GM13976 (cell line): ENCODE measurements at regions of chr6 and their contacts with region 1.

Region 1: DNA sequence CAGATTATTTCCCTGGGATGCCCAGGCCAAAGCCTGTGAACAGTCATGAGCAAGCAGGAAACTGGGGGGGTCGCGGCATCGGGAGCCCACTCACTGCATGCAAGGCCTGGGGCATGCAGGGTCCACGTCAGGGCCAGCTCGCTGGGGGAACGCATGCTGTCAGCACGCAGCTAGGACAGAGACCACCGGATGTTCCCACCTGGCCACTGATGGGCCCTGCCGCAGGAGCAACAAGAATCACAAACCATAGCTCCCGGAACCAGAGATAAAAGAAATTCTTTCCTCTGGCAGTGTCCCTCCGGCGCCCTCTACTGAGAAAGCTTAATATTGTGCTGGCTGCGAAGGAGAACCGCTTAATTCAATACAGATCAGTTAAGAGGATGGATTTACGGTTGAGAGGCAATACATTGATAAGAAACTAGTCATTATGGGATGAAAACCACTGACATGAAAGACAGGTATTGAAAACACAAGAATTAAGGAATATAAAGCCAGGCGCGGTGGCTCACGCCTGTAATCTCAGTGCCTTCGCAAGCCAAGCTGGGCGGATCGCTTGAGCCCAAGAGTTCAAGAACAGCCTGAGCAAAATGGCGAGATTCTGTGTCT is 32.6 kb downstream of the C6orf15 start:
- DNase-seq: peak; percentile 73
- CTCF ChIP-seq: peak; percentile 76

Region 2: GRCh38 chr6:30828027-30828960 is 251.5 kb before region 1 on chr6:
- in situ Hi-C with region 1: loop called (anchors 10 kb)
- DNase-seq: peak; percentile 69
- CTCF ChIP-seq: peak; percentile 83

Region 3: GRCh38 chr6:30915591-30915946 is 164.2 kb before region 1 on chr6:
- in situ Hi-C with region 1: loop called (anchors 5 kb)
- DNase-seq: peak; percentile 87
- CTCF ChIP-seq: peak; percentile 45

Region 4: GRCh38 chr6:31827286-31828079 is 747.7 kb after region 1 on chr6 and contains the start of gene HSPA1B:
- in situ Hi-C with region 1: no loop called
- DNase-seq: peak; percentile 95
- CTCF ChIP-seq: no peak